Activated T-helper 2 cell treated with anti-CD3 and anti-CD28 coated beads, Interferon-gamma antibody, Interleukin-2, Interleukin-4, amounts not matched to agents 10 μg/mL and 5 μg/mL and 100 μg/mL, durations not matched to agents 14 hours and 24 hours and 36 hours (primary cell): ENCODE measurements at regions of chr11 and their contacts with region 1.

Region 1: GRCh38 chr11:122853971-122854446 is 15.7 kb downstream of the CRTAM start:
- DNase-seq: no peak
- H3K4me3 Mint-ChIP-seq: no peak overlapping the region
- H3K27ac Mint-ChIP-seq: no peak overlapping the region
- H3K4me1 Mint-ChIP-seq: peaks cover 52% of the 10 kb centered on the region
- H3K27me3 Mint-ChIP-seq: peaks cover 5% of the 10 kb centered on the region

Region 2: GRCh38 chr11:122628810-122629555 is 225.0 kb before region 1 on chr11:
- intact Hi-C with region 1: loop called (anchors 2 kb)
- DNase-seq: peak; percentile 53
- H3K4me3 Mint-ChIP-seq: no peak overlapping the region
- H3K27ac Mint-ChIP-seq: no peak overlapping the region
- H3K4me1 Mint-ChIP-seq: peaks cover 3% of the 10 kb centered on the region
- H3K27me3 Mint-ChIP-seq: peaks cover 3% of the 10 kb centered on the region

Region 3: DNA sequence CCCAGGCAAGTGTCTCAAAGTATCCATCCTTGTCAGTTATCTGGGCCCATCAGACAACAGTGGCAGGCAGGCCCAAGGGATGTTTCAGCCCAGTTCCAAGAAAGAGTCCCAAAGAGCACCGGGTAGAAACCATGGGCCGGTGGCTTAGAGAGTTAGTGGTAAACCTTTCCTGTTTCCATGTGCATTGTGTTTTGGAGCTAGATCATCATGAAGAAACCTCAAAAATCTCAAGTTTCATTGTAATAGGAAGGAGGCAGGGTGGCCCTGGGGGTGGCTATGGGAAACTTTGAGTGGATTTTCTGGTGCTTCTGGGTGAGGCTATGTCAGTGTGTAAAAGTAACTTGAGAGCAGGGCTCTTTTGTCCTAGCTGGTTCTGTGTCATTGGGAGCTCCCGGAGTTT is 130.4 kb before region 1 on chr11:
- intact Hi-C with region 1: loop called (anchors 1 kb)
- DNase-seq: no peak
- H3K4me3 Mint-ChIP-seq: peak overlapping the region; percentile 47
- H3K27ac Mint-ChIP-seq: peak overlapping the region; percentile 88
- H3K4me1 Mint-ChIP-seq: peaks cover 56% of the 10 kb centered on the region
- H3K27me3 Mint-ChIP-seq: peaks cover 13% of the 10 kb centered on the region

Region 4: DNA sequence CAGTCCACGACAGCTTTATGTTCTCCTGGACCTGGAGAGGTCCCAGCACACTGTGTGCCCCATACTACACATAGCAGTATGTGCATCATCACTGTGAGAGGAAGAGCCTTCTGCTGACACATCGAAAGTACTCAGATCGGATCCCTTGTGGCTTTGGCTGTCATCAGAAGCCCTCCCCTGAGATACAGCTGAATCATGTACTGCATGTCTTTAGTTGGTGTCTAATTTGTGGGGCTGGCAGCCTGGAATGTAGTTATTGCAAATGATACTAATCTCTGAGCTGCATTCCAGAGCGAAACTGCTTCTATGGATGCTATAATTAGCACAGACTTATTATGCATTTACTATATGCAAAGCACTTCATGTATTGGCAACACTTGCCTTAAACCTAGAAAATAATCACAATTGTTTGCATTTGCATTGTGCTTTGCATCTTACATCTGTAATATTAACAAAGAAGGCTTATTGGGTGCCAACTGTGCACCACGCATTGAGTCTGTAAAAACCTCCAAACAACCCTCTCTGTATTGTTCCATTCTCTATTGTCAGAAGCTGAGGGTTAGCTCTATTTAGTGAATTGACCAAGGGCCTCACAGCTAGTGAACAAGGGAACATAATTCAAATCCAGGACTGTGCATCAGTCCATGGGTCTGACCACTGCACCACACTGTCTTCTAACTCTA is 104.9 kb before region 1 on chr11:
- intact Hi-C with region 1: loop called (anchors 1 kb)
- DNase-seq: peak; percentile 59
- H3K4me3 Mint-ChIP-seq: no peak overlapping the region
- H3K27ac Mint-ChIP-seq: no peak overlapping the region
- H3K4me1 Mint-ChIP-seq: peaks cover 64% of the 10 kb centered on the region
- H3K27me3 Mint-ChIP-seq: peaks cover 5% of the 10 kb centered on the region

Region 5: GRCh38 chr11:122808478-122808869 is 45.5 kb before region 1 on chr11:
- intact Hi-C with region 1: loop called (anchors 1 kb)
- DNase-seq: no peak
- H3K4me3 Mint-ChIP-seq: no peak overlapping the region
- H3K27ac Mint-ChIP-seq: peak overlapping the region; percentile 6
- H3K4me1 Mint-ChIP-seq: peaks cover 42% of the 10 kb centered on the region
- H3K27me3 Mint-ChIP-seq: peaks cover 2% of the 10 kb centered on the region

Region 6: DNA sequence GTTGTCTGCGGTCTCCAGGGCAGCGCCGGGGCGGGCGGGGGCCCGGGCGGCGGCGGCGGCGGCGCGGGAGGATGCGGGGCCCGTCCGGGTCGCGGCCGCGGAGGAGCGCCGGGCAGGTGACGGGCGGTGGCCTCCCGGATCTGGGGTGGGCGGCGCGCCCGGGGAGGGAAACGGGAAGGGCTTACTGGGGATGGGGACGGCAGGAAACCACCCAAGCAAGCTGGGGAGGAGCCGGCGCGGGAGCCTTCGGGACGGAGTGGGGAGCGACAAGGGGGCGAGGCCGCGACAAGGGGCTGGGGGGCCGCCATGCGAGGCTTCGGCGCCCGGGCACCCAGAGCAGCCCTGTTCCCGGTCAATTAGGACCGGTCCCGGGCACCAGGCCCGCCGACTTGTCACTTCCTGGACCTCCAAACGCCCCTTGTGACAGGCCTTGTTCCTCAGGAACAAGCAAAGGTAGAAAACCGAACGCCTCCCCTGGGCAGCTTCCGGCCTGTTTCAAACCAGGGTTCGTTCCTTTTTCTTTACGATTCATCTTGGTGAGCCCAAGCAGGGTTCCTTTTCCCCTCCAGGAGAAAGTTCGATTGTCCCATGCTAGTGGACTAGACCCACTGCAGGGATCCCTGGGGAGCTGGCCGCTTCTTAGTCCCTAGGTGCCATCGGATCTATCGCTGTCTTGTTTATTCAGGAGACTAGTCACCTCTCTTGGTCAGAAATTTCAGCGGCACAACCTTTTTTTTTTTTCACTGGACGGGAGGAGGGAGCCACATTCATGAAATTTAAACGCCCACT is 29.0 kb after region 1 on chr11:
- intact Hi-C with region 1: loop called (anchors 2 kb)
- DNase-seq: peak; percentile 33
- H3K4me3 Mint-ChIP-seq: peak overlapping the region; percentile 79
- H3K27ac Mint-ChIP-seq: peak overlapping the region; percentile 62
- H3K4me1 Mint-ChIP-seq: peaks cover 16% of the 10 kb centered on the region
- H3K27me3 Mint-ChIP-seq: peaks cover 24% of the 10 kb centered on the region

Region 7: DNA sequence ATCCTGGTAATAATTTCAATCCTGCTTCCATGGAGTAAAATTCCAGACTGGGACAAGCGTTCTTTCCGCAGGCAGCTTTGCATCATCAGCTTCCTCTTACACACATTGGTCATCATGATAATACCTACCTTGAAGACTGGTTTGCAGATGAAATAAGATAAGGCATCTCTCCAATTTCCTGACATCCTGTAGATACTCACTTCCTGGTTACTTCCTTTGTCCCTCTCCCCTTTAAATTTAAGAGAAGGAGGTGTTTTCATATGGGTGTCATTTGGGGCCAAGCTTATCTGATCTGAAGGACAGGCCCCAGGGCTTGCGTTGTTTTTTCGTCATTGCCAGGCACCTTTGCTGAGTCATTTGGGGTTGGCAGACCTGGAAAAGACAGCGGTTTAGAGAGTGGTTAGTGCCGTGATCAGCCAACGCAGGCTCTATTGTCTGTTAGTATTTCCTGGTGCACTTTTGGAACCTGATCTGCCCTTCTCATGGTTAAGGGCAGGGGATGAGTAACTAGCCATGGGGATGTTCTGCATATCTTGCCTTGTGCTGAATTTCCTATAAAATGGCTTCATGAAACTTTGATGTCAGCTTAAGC is 600.1 kb after region 1 on chr11:
- intact Hi-C with region 1: loop called (anchors 5 kb)
- DNase-seq: peak; percentile 73
- H3K4me3 Mint-ChIP-seq: peak overlapping the region; percentile 84
- H3K27ac Mint-ChIP-seq: peak overlapping the region; percentile 97
- H3K4me1 Mint-ChIP-seq: peaks cover 88% of the 10 kb centered on the region
- H3K27me3 Mint-ChIP-seq: no peaks in the 10 kb centered on the region